ENCODE measurements at regions of chr7 and their contacts with region 1.

Region 1: DNA sequence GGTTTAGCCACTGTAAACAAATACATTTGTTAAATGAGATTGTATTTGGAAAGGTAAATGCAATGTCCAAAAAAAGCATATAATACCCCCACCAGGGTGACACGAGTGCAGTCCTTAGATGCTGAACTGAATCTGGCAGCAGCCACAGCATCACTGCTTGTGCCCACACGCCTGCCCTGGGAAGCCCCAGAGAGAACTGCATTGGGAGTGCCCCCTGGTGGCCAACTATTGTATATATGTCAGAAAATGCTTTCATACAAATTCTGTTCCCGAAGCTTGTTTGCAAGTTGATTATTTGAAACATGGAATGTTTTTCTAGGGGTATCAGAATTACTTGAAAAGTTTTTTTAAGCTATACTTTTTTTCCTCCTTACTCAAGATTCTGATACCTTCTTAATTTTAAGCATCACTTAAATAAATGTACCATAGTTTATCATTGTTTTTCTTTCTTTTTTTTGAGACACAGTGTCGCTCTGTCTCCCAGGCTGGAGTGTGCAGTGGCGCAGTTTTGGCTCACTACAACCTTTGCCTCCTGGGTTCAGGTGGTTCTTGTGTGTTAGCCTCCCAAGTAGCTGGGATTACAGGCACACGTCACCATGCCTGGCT is 50.1 kb downstream of the LANCL2 start:
- DNase-seq: peak; percentile 85
- H3K4me3 Mint-ChIP-seq: no peak overlapping the region
- H3K27ac Mint-ChIP-seq: no peak overlapping the region
- H3K4me1 Mint-ChIP-seq: peaks cover 2% of the 10 kb centered on the region
- H3K27me3 Mint-ChIP-seq: no peaks in the 10 kb centered on the region

Region 2: GRCh38 chr7:55288070-55288824 is 127.0 kb before region 1 on chr7:
- CTCF ChIA-PET with region 1: interaction called, 135 read pairs
- POLR2A ChIA-PET with region 1: no interaction called
- intact Hi-C with region 1: no loop called
- DNase-seq: no peak
- H3K4me3 Mint-ChIP-seq: no peak overlapping the region
- H3K27ac Mint-ChIP-seq: no peak overlapping the region
- H3K4me1 Mint-ChIP-seq: no peaks in the 10 kb centered on the region
- H3K27me3 Mint-ChIP-seq: peaks cover 9% of the 10 kb centered on the region

Region 3: GRCh38 chr7:55992346-55992745 is 577.1 kb after region 1 on chr7:
- CTCF ChIA-PET with region 1: no interaction called
- POLR2A ChIA-PET with region 1: no interaction called
- intact Hi-C with region 1: no loop called
- DNase-seq: no peak
- H3K4me3 Mint-ChIP-seq: no peak overlapping the region
- H3K27ac Mint-ChIP-seq: peak overlapping the region; percentile 2
- H3K4me1 Mint-ChIP-seq: no peaks in the 10 kb centered on the region
- H3K27me3 Mint-ChIP-seq: no peaks in the 10 kb centered on the region